ENCODE measurements at regions of chr19 and their contacts with region 1.

Region 1: GRCh38 chr19:14556662-14557188 is 15.1 kb downstream of the NDUFB7 start:
- DNase-seq: peak; percentile 79
- H3K4me3 ChIP-seq: no peak overlapping the region
- H3K27ac ChIP-seq: no peak overlapping the region
- H3K4me1 ChIP-seq: peaks cover 6% of the 10 kb centered on the region
- H3K27me3 ChIP-seq: no peaks in the 10 kb centered on the region
- CTCF ChIP-seq: peak; percentile 98 to 99
- POLR2A ChIP-seq: no peak

Region 2: GRCh38 chr19:14505488-14506432 is 51.0 kb before region 1 on chr19:
- CTCF ChIA-PET with region 1: interaction called, 3 read pairs
- POLR2A ChIA-PET with region 1: no interaction called
- dilution Hi-C with region 1: no loop called
- intact Hi-C with region 1: loop called (anchors 1 kb)
- DNase-seq: peak; percentile 28
- H3K4me3 ChIP-seq: no peak overlapping the region
- H3K27ac ChIP-seq: no peak overlapping the region
- H3K4me1 ChIP-seq: peaks cover 13% of the 10 kb centered on the region
- H3K27me3 ChIP-seq: peaks cover 0 to 2% of the 10 kb centered on the region in 2 experiments
- CTCF ChIP-seq: peak; percentile 71 to 83
- POLR2A ChIP-seq: no peak

Region 3: DNA sequence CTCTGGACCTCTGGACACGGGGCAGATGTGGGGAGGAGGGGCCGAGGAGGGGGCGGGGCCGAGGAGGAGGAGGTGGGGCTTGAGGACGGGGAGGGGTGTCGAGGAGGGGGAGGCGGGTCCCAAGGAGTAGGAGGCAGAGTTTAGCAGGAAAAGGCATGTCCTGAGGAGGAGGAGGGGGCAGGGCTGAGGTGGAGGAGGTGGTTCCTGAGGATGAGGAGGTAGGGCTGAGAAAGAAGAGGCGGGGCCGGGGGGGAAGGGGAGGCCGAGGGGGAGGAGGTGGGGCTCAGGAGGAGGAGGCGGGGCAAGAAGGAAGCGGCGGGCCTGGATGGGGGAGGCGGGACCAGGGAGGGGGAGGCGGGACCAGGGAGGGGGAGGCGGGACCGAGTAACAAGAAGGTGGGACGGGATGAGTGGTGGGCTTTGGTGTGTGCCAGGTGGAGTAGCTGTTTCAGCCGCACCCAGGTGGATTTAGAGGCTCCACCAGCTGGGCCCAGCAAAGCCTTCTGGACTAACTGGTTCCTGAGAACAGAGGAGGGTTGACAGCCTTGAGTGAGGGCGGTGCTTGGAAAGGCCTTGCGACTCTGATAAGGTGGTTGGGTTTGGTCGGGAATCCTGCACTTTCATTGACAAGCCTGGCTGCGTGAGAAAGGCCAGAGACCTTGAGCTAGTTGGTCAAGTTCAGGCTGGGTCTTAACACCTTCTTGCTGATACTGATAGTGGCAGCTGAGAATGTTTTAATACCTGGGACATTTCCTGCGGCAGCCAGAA is 19.6 kb before region 1 on chr19:
- CTCF ChIA-PET with region 1: interaction called, 6 read pairs
- POLR2A ChIA-PET with region 1: no interaction called
- dilution Hi-C with region 1: no loop called
- intact Hi-C with region 1: loop called (anchors 1 kb)
- DNase-seq: peak; percentile 77
- H3K4me3 ChIP-seq: peak overlapping the region in 1 of 3 experiments; percentile 40
- H3K27ac ChIP-seq: no peak overlapping the region
- H3K4me1 ChIP-seq: no peaks in the 10 kb centered on the region
- H3K27me3 ChIP-seq: no peaks in the 10 kb centered on the region
- CTCF ChIP-seq: no peak
- POLR2A ChIP-seq: no peak

Region 4: DNA sequence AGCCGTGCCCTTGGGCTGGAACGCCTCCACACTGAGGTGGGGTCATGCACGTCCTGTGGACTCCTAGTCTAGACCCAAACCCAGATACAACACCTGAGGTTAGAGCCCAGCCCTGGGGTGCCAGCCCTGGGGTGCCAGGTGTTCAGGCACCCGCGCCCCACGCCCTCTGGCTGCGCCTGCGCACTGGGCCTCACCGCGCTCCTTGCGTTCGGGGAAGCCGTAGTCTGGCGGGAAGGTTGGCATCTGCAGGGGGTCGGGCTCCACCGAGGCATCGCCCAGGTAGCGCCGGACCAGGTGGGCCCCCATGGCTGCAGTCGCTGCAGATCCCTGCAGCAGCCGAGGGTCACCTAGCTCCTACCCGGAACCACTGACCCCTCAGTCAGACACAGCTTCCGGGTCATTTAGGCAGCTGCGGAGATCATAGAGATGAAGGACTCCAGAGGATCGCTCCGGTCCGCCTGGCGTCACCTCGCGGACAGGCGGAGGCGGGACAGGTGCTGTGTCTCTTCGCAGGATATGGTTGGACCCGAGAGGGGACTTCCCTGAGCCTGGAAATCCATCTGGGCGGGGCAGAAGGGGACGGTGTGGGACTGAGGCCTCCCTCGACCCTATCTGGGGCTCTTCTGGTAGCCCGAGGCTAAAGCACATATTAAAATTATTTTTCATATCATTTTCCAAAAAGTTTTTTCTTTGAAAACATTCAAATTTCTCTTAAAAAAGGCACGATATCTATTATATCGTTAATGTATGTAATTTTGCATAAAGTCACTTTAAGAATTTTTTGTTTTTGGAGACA is 15.2 kb after region 1 on chr19 and contains the start of gene NDUFB7:
- CTCF ChIA-PET with region 1: interaction called, 17 read pairs
- POLR2A ChIA-PET with region 1: no interaction called
- dilution Hi-C with region 1: no loop called
- intact Hi-C with region 1: no loop called
- DNase-seq: peak; percentile 94
- H3K4me3 ChIP-seq: peak within 1 kb of the TSS; percentile 48 to 96 (median 70)
- H3K27ac ChIP-seq: peak within 1 kb of the TSS; percentile 6
- H3K4me1 ChIP-seq: peaks cover 8% of the 10 kb centered on the region
- H3K27me3 ChIP-seq: no peaks in the 10 kb centered on the region
- CTCF ChIP-seq: peak; percentile 71 to 73
- POLR2A ChIP-seq: peak; percentile 62
- total RNA-seq, gene NDUFB7: 170 and 177 TPM in 2 replicates

Region 5: GRCh38 chr19:14689598-14690503 is 133.1 kb after region 1 on chr19 and contains the start of gene ZNF333:
- CTCF ChIA-PET with region 1: interaction called, 19 read pairs
- POLR2A ChIA-PET with region 1: no interaction called
- dilution Hi-C with region 1: no loop called
- intact Hi-C with region 1: loop called (anchors 1 kb)
- DNase-seq: peak; percentile 88
- H3K4me3 ChIP-seq: peak within 1 kb of the TSS; percentile 98 to 99 (median 99)
- H3K27ac ChIP-seq: peak within 1 kb of the TSS; percentile 95
- H3K4me1 ChIP-seq: peaks cover 9% of the 10 kb centered on the region
- H3K27me3 ChIP-seq: peaks cover 0 to 2% of the 10 kb centered on the region in 2 experiments
- CTCF ChIP-seq: no peak
- POLR2A ChIP-seq: peak; percentile 74
- total RNA-seq, gene ZNF333: 17.1 and 19.7 TPM in 2 replicates

Measured in endothelial cell of umbilical vein (primary cell).